Activated CD4-positive, alpha-beta T cell treated with anti-CD3 and anti-CD28 coated beads, Interleukin-2, amount 10 ng/mL, durations not matched to agents 24 days and 14 days (primary cell): ENCODE measurements at regions of chr5 and their contacts with region 1.

Region 1: GRCh38 chr5:161544350-161544765 is 2.2 kb downstream of the GABRB2 start:
- DNase-seq: peak; percentile 70
- H3K4me3 Mint-ChIP-seq: no peak overlapping the region
- H3K27ac Mint-ChIP-seq: no peak overlapping the region
- H3K4me1 Mint-ChIP-seq: peaks cover 9% of the 10 kb centered on the region
- H3K27me3 Mint-ChIP-seq: peaks cover 48% of the 10 kb centered on the region

Region 2: DNA sequence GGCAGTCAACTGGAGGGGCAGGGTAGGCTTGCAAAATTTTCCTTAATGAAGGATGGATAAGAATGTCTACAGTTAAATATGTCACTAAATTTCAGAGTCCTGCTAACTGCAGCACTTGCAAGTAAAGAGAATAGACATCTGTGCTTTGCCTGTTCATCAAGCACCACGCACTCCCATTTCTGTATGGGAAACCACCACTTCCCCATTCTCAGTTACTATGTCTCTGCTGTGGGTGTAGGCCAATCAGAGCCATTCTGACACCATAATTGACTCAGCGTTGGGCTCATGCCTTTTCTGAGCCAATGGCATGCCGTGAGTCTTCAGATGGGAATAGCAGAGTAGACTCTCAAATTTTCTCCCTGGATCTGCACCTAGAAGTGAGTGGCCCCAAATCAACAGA is 245.3 kb before region 1 on chr5:
- intact Hi-C with region 1: no loop called
- DNase-seq: no peak
- H3K4me3 Mint-ChIP-seq: no peak overlapping the region
- H3K27ac Mint-ChIP-seq: no peak overlapping the region
- H3K4me1 Mint-ChIP-seq: no peaks in the 10 kb centered on the region
- H3K27me3 Mint-ChIP-seq: no peaks in the 10 kb centered on the region

Region 3: DNA sequence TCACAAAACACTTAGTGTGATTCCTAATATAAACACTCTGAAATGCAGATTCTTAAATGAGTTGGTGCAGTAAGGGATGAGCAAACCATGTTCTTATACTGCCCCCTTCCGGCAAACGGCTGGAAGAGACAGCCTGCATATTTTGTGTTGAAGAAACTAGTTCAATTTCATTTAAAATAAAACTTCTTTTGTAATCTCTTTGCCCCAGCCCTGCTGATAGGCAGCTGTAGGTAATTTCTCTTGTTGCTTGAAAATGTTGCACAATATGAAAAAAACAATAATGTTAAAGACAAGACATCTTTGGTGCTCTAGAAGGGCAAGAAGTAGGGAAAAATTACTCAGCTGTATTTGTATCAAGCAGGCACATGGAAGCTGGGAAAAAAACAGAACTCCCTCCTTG is 1803.3 kb after region 1 on chr5:
- intact Hi-C with region 1: loop called (anchors 2 kb)
- DNase-seq: peak; percentile 87
- H3K4me3 Mint-ChIP-seq: no peak overlapping the region
- H3K27ac Mint-ChIP-seq: no peak overlapping the region
- H3K4me1 Mint-ChIP-seq: no peaks in the 10 kb centered on the region
- H3K27me3 Mint-ChIP-seq: peaks cover 3% of the 10 kb centered on the region

Region 4: DNA sequence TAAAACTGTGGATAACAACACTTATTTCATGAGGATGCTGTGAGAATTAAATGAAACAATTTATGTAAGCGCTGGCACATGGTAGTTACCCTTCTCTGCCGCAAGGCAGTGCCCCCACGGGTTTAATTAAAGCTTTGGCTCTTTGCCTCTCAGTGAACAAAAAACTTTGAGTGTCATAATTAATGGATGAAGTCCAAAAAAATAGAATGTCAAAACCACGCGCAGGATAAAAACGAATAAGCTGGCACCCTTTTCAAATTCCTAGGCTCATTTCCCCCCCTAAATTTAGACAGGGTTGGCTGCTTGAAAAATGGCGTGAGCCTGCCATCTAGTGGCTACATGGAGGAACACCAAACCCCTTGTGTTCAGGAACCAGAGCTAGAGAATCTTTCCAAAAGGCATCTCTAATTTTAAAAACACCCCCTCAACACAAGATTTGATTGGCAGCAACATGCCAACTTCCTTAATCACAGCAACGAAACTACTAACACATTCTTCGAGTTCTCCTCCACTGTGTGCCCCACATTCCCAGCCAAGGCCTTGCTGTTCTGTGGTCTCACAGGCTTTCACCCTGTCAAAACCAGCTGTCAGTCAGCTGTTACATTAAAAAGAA is 1864.1 kb after region 1 on chr5:
- intact Hi-C with region 1: loop called (anchors 2 kb)
- DNase-seq: peak; percentile 84
- H3K4me3 Mint-ChIP-seq: no peak overlapping the region
- H3K27ac Mint-ChIP-seq: no peak overlapping the region
- H3K4me1 Mint-ChIP-seq: peaks cover 5% of the 10 kb centered on the region
- H3K27me3 Mint-ChIP-seq: peaks cover 8% of the 10 kb centered on the region